Activated naive CD8-positive, alpha-beta T cell treated with anti-CD3 and anti-CD28 coated beads, Interleukin-2, amount 10 ng/mL, durations not matched to agents 7 days and 5 days (primary cell): ENCODE measurements at regions of chr2 and their contacts with region 1.

Region 1: DNA sequence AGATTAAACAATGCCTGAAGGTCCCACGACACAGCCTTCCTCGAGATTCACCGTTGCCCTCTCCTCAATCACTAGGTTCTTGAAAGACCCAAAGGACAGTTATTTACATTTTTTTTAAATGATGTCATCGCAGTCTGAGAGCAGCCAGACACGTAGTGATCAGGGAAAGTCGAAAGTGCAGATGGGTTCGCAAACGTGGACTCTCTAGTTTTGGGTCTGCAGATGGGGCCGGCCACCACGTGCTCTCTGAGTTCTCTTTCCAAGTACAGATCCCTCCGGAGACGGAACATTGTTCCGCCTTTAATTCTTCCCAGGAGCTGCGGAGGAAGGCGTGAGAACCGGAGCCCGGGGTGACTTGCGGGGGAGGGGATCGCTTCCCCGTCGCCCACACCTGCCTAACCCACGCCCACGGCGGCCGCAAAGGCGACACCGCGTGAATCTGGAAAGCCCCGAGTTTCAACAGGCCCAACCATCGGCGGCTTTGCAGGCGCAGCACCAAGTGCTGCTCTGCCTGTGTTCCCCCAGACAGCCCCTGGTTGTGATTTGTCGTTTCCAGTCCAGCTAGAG is 54.3 kb downstream of the PKDCC start:
- DNase-seq: peak; percentile 88
- ATAC-seq: peak; percentile 55
- H3K4me3 Mint-ChIP-seq: peak overlapping the region; percentile 77
- H3K27ac Mint-ChIP-seq: peak overlapping the region; percentile 94
- H3K4me1 Mint-ChIP-seq: peaks cover 62% of the 10 kb centered on the region
- H3K27me3 Mint-ChIP-seq: no peaks in the 10 kb centered on the region

Region 2: DNA sequence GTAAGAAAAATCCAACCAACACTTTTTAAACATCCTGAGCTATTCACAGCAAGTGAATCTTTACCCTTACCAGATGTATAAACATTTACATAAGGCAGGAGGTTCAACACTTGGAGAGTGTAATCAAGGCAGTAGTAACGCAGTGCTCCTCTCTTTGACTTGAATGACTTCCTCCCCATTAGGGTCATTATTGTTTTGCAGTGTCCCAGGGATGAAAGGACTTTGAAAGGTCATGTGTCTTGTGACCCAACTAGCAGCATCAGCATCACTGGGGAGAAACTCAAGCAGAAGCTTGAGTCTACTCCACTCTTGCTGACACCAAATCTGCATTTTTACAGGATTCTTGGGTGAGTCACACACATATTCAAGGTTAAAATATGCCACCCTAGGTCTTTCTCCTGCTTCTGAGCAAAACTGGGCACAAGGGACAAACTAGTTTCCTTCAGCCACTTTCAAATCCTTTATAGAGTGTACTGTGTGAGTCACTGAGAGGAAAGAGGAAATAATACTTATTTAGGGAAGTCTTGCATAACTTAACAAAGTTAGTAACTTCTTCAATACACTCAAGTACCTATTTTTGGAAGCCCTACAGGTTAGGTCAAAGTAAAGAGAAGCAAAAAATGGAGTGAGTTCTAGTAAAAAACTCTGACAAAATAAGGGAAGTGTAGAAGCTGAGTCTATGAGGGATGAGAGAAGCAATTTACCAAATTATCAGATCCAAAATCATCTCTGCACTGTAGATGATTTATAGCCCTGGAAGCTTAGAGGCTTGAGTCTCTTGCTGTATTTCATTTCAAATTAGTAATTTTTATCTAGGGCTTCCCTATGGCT is 16.0 kb after region 1 on chr2:
- POLR2A ChIA-PET with region 1: interaction called, 170 read pairs
- DNase-seq: no peak
- ATAC-seq: peak; percentile 63
- H3K4me3 Mint-ChIP-seq: peak overlapping the region; percentile 13
- H3K27ac Mint-ChIP-seq: peak overlapping the region; percentile 67
- H3K4me1 Mint-ChIP-seq: peaks cover 29% of the 10 kb centered on the region
- H3K27me3 Mint-ChIP-seq: peaks cover 3% of the 10 kb centered on the region

Region 3: GRCh38 chr2:42132966-42133641 is 31.0 kb after region 1 on chr2:
- POLR2A ChIA-PET with region 1: interaction called, 170 read pairs
- DNase-seq: peak; percentile 85
- ATAC-seq: peak; percentile 92
- H3K4me3 Mint-ChIP-seq: peak overlapping the region; percentile 78
- H3K27ac Mint-ChIP-seq: peak overlapping the region; percentile 97
- H3K4me1 Mint-ChIP-seq: peaks cover 69% of the 10 kb centered on the region
- H3K27me3 Mint-ChIP-seq: no peaks in the 10 kb centered on the region

Region 4: GRCh38 chr2:42141687-42142546 is 39.8 kb after region 1 on chr2:
- POLR2A ChIA-PET with region 1: interaction called, 131 read pairs
- DNase-seq: no peak
- ATAC-seq: peak; percentile 57
- H3K4me3 Mint-ChIP-seq: peak overlapping the region; percentile 55
- H3K27ac Mint-ChIP-seq: peak overlapping the region; percentile 58
- H3K4me1 Mint-ChIP-seq: peaks cover 24% of the 10 kb centered on the region
- H3K27me3 Mint-ChIP-seq: no peaks in the 10 kb centered on the region

Region 5: DNA sequence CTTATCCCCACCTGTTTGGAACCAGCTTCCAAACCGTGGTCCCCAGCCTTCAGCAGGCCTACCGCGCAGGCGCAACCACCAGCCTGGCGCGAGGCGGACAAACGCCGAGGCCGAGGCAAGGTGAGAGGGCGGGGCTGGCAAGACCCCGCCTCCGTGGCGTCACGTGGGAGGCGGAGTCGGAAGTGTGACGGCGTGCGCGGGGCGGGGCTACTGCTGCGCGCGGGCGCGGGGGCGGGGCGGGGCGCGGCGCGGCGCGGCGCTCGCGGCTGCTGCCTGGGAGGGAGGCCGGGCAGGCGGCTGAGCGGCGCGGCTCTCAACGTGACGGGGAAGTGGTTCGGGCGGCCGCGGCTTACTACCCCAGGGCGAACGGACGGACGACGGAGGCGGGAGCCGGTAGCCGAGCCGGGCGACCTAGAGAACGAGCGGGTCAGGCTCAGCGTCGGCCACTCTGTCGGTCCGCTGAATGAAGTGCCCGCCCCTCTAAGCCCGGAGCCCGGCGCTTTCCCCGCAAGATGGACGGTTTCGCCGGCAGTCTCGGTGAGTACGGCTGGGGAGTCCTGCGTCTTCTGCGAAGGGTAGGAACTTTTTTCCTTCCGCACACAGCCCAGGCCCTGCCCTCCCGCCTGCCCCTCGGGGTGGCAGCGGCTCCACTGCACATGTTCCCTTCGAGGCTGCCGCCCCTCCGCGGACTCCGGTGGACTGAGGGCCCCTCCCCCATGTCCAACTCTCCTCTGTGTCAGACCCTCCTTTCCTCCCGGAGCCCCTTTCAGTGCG is 67.2 kb after region 1 on chr2 and contains the start of gene EML4:
- POLR2A ChIA-PET with region 1: interaction called, 43 read pairs
- DNase-seq: peak; percentile 99
- ATAC-seq: peak; percentile 86
- H3K4me3 Mint-ChIP-seq: peak within 1 kb of the TSS; percentile 11
- H3K27ac Mint-ChIP-seq: no peak within 1 kb of the TSS
- H3K4me1 Mint-ChIP-seq: peaks cover 26% of the 10 kb centered on the region
- H3K27me3 Mint-ChIP-seq: no peaks in the 10 kb centered on the region
- total RNA-seq, gene EML4: 111 to 119 TPM